Heart right ventricle (tissue), 16 donors: ENCODE measurements at regions of chr6 and their contacts with region 1.

Region 1: GRCh38 chr6:32984605-32985389 is 16.4 kb downstream of the BRD2 start:
- DNase-seq: peak; percentile 82 to 90
- ATAC-seq: peak; percentile 75 to 90 (median 84)
- H3K4me3 ChIP-seq: no peak overlapping the region
- H3K27ac ChIP-seq: no peak overlapping the region
- H3K4me1 ChIP-seq: peaks cover 0 to 24% (median 4%) of the 10 kb centered on the region in 9 donors
- H3K27me3 ChIP-seq: no peaks in the 10 kb centered on the region
- CTCF ChIP-seq: peak; percentile 70 to 96 (median 92)

Region 2: GRCh38 chr6:32894080-32895005 is 90.5 kb before region 1 on chr6:
- intact Hi-C with region 1: loop called in 3 of 10 experiments (anchors 5 kb)
- DNase-seq: peak; percentile 94 to 95
- ATAC-seq: peak; percentile 99 to 100 (median 100)
- H3K4me3 ChIP-seq: peak overlapping the region; percentile 32 to 82 (median 70)
- H3K27ac ChIP-seq: peak overlapping the region; percentile 62 to 92 (median 86)
- H3K4me1 ChIP-seq: peaks cover 0 to 18% (median 10%) of the 10 kb centered on the region in 9 donors
- H3K27me3 ChIP-seq: no peaks in the 10 kb centered on the region
- CTCF ChIP-seq: peak in 2 of 9 donors; percentile 17 to 27

Region 3: DNA sequence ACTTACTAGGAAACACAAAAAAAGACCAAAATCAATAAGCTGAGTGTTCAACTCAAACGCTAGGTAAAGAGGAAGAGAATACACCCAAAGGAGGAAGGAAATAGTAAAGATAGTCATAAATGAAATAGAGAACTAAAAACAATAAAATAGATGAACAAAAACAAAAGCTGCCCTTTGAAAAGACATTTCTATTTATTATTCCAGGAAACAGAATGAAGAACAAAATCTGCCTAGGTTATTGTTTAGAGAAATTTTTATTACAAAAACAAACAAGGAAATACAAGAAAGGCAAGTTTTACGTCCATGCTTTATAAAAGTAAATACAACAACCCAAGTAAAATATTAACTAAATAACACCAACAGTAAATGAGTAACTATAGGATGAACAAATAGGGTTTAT is 64.1 kb before region 1 on chr6:
- intact Hi-C with region 1: no loop called
- DNase-seq: no peak
- ATAC-seq: no peak
- H3K4me3 ChIP-seq: no peak overlapping the region
- H3K27ac ChIP-seq: peak overlapping the region in 1 of 10 donors; percentile 24
- H3K4me1 ChIP-seq: peaks cover 0 to 19% (median 0%) of the 10 kb centered on the region in 9 donors
- H3K27me3 ChIP-seq: peaks cover 0 to 19% (median 6%) of the 10 kb centered on the region in 7 donors
- CTCF ChIP-seq: no peak

Region 4: GRCh38 chr6:32933636-32934085 is 51.1 kb before region 1 on chr6:
- intact Hi-C with region 1: loop called (anchors 1 to 5 kb)
- DNase-seq: peak; percentile 72 to 83
- ATAC-seq: peak; percentile 50 to 77 (median 68)
- H3K4me3 ChIP-seq: no peak overlapping the region
- H3K27ac ChIP-seq: peak overlapping the region in 1 of 10 donors; percentile 5
- H3K4me1 ChIP-seq: peaks cover 0 to 46% (median 0%) of the 10 kb centered on the region in 9 donors
- H3K27me3 ChIP-seq: no peaks in the 10 kb centered on the region
- CTCF ChIP-seq: peak; percentile 72 to 92 (median 82)

Region 5: DNA sequence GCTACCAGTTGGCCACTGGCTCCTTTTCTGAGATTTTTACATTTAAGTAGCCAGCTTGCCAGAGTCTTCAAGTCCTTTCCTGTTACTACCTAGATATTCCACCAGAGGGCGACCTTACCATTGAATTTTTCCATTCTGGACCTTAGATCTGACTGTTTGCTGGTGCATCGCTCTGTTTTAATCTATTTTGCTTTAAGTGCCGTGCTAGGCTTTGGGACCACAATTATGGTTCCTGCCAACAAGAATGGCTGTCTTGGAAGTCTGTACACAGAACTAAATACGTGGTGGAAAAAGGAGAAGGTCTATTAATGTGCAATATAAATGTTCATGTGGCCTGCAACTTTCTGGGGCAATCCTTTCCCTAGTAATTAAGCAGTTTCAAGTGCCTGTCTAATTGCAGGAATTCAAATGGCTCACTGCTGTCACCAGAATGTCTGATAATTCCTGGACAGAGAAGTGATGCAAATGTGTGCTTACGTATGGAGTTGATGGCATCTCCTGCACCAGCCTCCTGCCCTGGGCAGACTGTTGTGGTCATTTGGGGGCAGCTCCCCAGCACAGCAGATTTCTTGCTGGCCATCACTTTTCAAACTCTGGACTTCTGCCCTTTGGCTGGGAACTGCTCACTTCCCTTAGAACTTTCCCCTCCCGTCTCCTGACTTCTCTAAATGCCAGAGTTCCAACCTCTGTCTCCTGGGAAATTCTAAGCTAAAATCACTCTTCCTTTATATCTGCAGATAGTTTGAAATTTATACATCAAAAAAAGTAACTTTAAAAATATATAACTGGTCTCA is 30.2 kb after region 1 on chr6:
- intact Hi-C with region 1: no loop called
- DNase-seq: peak in 1 of 2 donors; percentile 82
- ATAC-seq: peak; percentile 41 to 75 (median 63)
- H3K4me3 ChIP-seq: peak overlapping the region in 2 of 10 donors; percentile 4
- H3K27ac ChIP-seq: peak overlapping the region in 8 of 10 donors; percentile 34 to 70 (median 56)
- H3K4me1 ChIP-seq: peaks cover 0 to 57% (median 42%) of the 10 kb centered on the region in 9 donors
- H3K27me3 ChIP-seq: peaks cover 0 to 28% (median 9%) of the 10 kb centered on the region in 7 donors
- CTCF ChIP-seq: peak; percentile 65 to 89 (median 84)

Region 6: DNA sequence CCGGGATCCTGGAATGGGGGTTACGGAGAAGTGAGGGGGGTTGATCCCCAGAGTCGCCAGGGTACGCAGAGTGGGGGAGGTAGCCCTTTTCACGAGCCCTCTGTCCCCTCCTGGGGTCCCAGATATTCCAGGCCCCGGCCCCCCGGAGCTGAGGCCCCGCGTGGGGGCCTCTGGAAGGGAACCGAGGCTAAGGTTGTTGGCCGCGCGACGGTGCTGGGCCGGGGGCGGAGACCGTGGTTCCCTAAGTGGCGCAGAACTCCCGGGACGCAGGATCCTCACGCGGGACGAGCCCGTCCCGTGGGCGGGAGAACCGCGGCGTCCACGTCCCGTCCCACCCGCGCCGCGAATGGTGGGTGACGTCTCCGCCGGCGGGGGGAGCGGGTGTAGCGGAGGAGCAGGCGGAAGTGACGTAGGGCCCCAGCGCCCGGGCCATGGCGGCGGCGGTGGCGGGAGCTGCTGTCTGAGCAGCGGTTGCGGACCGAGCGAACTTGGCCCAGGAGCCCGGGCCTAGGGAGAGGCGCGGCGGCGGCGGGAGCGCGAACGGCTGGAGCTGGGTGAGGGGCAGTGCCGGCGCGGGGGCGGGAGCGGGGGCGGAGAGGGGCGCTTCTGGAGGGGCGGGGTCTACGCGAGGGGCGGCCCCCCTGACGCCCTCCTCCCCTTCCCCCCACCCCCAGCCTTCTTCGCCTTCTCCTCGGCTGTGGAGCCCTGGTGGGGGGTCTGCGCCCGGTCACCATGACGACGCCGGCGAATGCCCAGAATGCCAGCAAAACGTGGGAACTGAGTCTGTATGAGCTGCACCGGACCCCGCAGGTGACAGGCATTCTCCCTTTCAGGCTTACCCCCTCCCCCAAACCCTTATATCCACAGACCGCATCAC is 223.5 kb after region 1 on chr6 and contains the start of gene RING1:
- intact Hi-C with region 1: no loop called
- DNase-seq: peak; percentile 90
- ATAC-seq: peak; percentile 82 to 89 (median 86)
- H3K4me3 ChIP-seq: peak within 1 kb of the TSS; percentile 60 to 98 (median 94)
- H3K27ac ChIP-seq: peak within 1 kb of the TSS; percentile 79 to 99 (median 97)
- H3K4me1 ChIP-seq: peaks cover 10 to 53% (median 37%) of the 10 kb centered on the region in 9 donors
- H3K27me3 ChIP-seq: peaks cover 0 to 9% (median 0%) of the 10 kb centered on the region in 7 donors
- CTCF ChIP-seq: no peak
- total RNA-seq, gene RING1: 26.5 to 32.1 (median 28.0) TPM